ENCODE measurements at regions of chr16 and their contacts with region 1.

Region 1: DNA sequence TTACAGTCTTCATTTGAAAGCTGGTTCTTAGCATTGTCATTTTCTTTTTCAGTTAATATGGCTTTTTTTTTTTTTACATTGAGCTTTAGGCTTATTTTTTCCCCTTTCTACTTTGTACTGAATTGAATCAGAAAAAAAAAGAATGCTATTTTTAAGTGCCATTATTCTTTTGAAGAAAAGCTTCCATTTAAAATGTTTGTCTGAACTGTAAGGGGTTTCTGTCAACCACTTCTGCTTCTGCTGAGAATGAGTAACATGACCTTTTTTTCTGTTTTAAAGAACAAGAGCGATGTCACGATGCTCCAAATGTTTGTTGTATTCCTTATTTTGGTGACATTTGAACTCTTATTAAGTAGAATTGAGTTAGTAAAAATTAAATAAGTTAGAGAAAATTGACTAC is 50.0 kb downstream of the MRTFB start:
- DNase-seq: no peak
- ATAC-seq: no peak
- H3K4me3 ChIP-seq: no peak overlapping the region
- H3K4me3 Mint-ChIP-seq: no peak overlapping the region
- H3K27ac ChIP-seq: no peak overlapping the region
- H3K27ac Mint-ChIP-seq: no peak overlapping the region
- H3K4me1 ChIP-seq: no peaks in the 10 kb centered on the region
- H3K4me1 Mint-ChIP-seq: peaks cover 26% of the 10 kb centered on the region
- H3K27me3 ChIP-seq: no peaks in the 10 kb centered on the region
- H3K27me3 Mint-ChIP-seq: no peaks in the 10 kb centered on the region
- CTCF ChIP-seq: no peak

Region 2: DNA sequence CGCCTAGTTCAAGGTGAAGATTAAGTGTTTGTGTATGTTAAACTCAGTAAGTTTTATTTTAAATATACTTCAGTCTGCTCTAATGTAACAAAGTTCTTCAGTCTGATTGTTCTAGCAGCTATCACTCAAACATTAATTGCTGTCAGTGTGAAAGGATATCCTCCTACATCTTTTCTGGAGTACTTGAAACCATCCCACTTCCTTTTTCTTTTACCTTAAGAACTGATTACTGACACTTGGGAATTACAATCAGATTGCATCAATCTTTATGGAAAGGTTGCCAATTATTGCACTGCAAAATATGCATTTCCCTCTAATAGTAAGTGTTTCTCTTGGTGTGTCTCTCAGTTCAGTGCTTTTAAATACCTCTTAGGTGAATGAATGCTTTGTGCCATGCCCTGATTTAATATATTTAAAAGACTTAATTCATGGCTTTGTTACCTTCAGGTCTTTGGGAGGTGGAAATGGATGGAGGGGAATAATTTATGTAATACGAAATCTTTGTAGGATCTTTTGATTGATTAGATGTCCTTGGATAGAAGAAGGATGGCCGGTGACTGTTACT is 33.5 kb before region 1 on chr16:
- CTCF ChIA-PET with region 1: no interaction called
- POLR2A ChIA-PET with region 1: no interaction called
- intact Hi-C with region 1: loop called in 1 of 2 experiments (anchors 1 kb)
- DNase-seq: no peak
- ATAC-seq: no peak
- H3K4me3 ChIP-seq: no peak overlapping the region
- H3K4me3 Mint-ChIP-seq: no peak overlapping the region
- H3K27ac ChIP-seq: no peak overlapping the region
- H3K27ac Mint-ChIP-seq: no peak overlapping the region
- H3K4me1 ChIP-seq: no peaks in the 10 kb centered on the region
- H3K4me1 Mint-ChIP-seq: peaks cover 35% of the 10 kb centered on the region
- H3K27me3 ChIP-seq: no peaks in the 10 kb centered on the region
- H3K27me3 Mint-ChIP-seq: no peaks in the 10 kb centered on the region
- CTCF ChIP-seq: no peak

Region 3: DNA sequence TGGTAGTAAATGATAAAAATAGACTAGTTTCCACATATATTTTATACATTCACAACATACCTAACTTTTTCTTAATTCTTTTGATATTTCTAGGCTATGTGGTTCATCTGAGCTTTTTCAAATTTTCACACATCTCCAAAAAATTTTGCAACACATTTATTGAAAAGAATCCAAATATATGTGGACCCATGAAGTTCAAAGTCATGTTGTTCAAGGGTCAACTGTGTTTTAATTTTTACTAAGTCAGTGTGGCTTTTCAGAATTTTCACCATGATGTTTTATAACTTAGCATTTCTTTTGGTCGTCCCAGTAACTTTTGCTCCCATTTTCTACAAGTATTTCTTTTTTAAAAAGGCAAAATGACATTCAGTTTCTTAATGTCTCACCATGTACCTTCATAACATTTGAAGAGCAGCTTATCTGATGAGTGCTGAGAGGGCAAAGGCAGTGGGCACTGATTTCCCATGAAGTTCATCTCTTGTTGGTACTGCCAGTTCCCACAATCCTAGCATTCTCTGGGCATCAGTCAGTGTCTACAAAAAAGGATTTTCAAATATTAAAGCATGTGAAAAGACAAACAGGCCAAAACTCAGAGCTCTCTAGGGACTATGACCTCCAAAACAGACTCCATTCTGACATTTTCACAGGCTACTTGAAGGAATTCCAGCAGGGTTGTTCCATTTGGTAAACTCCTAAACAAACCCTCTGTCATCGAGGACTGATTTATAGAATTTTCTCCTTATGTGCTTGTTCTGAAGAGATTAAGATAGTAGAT is 30.3 kb after region 1 on chr16:
- CTCF ChIA-PET with region 1: no interaction called
- POLR2A ChIA-PET with region 1: no interaction called
- intact Hi-C with region 1: no loop called
- DNase-seq: no peak
- ATAC-seq: no peak
- H3K4me3 ChIP-seq: no peak overlapping the region
- H3K4me3 Mint-ChIP-seq: no peak overlapping the region
- H3K27ac ChIP-seq: no peak overlapping the region
- H3K27ac Mint-ChIP-seq: no peak overlapping the region
- H3K4me1 ChIP-seq: no peaks in the 10 kb centered on the region
- H3K4me1 Mint-ChIP-seq: no peaks in the 10 kb centered on the region
- H3K27me3 ChIP-seq: no peaks in the 10 kb centered on the region
- H3K27me3 Mint-ChIP-seq: no peaks in the 10 kb centered on the region
- CTCF ChIP-seq: no peak

Measured in CD4-positive, alpha-beta T cell (primary cell).